ENCODE measurements at regions of chr1 and their contacts with region 1.

Region 1: DNA sequence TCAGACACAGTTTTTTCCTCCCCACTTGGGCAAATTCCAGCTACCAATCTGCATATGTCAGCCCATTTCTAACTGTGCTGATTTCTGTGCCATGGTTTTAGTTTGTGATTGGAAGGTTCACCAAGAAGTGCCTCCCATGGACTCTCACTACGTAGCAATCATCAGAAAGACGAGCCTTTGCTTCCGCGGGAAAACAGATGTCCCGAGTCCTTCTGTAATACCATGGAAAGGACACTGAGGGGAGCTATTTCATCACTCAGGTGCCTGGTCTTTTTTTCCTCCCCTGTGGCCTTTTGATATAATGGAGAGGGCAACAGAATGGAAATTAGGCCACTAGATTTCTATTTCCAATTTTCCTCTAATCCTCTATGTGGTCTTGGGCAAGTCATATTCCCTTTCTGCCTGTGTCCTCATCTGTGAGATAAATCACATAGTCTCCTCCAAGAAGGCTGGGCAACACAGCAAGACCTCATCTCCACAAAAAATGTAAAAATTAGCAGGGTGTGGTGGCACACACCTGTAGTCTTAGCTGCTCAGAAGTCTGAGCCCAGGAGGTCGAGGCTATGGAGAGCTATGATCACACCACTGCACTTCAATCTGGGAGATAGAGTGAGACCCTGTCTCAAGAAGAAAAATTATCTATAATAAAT is 24.8 kb downstream of the LEMD1 start:
- DNase-seq: peak; percentile 43
- H3K4me3 Mint-ChIP-seq: no peak overlapping the region
- H3K27ac Mint-ChIP-seq: no peak overlapping the region
- H3K4me1 Mint-ChIP-seq: no peaks in the 10 kb centered on the region
- H3K27me3 Mint-ChIP-seq: peaks cover 10% of the 10 kb centered on the region

Region 2: DNA sequence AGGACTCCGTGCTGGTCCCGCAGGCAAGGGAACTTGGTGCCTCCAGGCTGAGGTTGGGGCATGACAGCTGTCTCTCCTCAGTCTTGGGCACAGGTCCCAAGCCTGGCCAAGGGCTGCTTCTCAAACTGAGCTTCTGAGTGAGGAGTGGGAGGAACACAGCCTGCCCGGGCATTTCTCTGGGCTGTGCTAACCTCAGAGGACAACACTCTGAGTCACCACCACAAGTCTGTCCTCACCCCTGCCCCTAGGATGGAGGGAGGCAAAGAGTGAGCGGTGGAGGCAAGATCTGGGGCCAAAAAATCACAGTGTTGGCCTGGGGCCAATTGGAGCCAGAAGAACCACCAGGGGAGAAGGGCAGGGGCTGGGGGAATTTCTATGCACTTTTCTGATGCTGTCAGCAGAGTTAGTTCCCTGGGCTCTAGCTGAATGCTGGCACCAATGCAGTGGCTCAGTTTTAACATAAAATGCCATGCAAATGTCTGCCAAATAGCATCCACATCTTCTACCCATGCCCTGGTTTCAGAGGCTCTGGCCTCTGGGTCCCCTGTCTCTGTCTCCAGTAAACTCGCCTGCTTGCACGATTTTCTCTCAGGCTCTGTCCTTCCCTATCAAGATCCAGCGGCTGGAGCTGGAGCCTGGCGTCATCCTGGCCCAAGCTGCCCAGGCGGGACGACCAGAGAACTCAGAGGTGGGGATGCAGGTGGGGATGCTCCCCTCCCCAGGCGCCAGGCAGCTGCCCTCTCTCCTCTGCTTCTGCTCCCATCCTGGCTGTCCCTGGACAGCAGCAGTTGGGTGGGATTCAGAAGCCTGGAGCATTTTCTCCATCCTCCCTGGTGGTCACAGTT is 96.4 kb after region 1 on chr1:
- CTCF ChIA-PET with region 1: interaction called, 130 read pairs
- intact Hi-C with region 1: no loop called
- DNase-seq: no peak
- H3K4me3 Mint-ChIP-seq: no peak overlapping the region
- H3K27ac Mint-ChIP-seq: no peak overlapping the region
- H3K4me1 Mint-ChIP-seq: no peaks in the 10 kb centered on the region
- H3K27me3 Mint-ChIP-seq: peaks cover 29% of the 10 kb centered on the region

Region 3: GRCh38 chr1:205578780-205579606 is 181.9 kb after region 1 on chr1:
- CTCF ChIA-PET with region 1: no interaction called
- intact Hi-C with region 1: loop called (anchors 5 kb)
- DNase-seq: peak; percentile 2
- H3K4me3 Mint-ChIP-seq: no peak overlapping the region
- H3K27ac Mint-ChIP-seq: no peak overlapping the region
- H3K4me1 Mint-ChIP-seq: peaks cover 2% of the 10 kb centered on the region
- H3K27me3 Mint-ChIP-seq: peaks cover 4% of the 10 kb centered on the region

Region 4: DNA sequence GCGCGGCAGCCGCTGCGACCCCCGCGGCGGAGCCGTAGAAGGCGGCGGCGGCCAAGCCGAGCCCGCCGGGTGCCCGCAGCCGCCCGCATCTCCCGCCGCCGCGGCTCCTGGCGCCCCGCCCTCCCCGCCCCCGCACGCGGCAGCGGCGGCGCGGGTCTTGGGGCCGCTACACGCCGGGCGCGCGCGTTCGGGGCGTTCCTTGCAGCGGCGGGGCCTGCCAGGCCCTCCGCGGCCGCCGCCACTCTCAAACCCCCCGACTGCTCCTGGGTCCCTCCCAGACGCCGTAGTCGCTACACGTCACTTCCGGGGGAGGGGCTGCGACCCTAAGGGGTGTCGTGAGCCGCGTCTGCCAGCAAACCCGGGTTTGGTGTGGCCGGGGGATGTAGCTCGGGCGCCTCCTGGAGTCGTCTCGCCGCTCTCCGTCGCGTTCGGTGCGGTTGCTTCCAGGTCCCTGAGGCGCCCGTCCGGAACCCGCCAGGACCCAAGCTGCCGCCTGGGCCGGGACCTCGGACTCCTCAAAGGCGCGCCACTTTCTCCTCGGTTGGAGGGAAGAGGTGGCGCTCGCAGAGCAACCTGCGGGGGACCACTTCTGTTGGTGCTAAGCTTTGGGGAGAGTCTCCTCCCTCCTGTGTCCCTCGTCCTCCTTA is 234.8 kb after region 1 on chr1 and contains the start of gene ELK4:
- CTCF ChIA-PET with region 1: no interaction called
- intact Hi-C with region 1: no loop called
- DNase-seq: peak; percentile 100
- H3K4me3 Mint-ChIP-seq: peak within 1 kb of the TSS; percentile 81
- H3K27ac Mint-ChIP-seq: peak within 1 kb of the TSS; percentile 92
- H3K4me1 Mint-ChIP-seq: peaks cover 37% of the 10 kb centered on the region
- H3K27me3 Mint-ChIP-seq: no peaks in the 10 kb centered on the region
- total RNA-seq, gene ELK4: 60.5 to 62.4 TPM

Measured in activated naive CD4-positive, alpha-beta T cell treated with anti-CD3 and anti-CD28 coated beads for 36 hours (primary cell).